HEK293 (cell line): ENCODE measurements at regions of chr11 and their contacts with region 1.

Region 1: GRCh38 chr11:65850831-65851811 is 6.9 kb downstream of the CFL1 start:
- H3K4me3 ChIP-seq: no peak overlapping the region
- H3K27ac ChIP-seq: no peak overlapping the region
- H3K4me1 ChIP-seq: no peaks in the 10 kb centered on the region
- CTCF ChIP-seq: no peak

Region 2: DNA sequence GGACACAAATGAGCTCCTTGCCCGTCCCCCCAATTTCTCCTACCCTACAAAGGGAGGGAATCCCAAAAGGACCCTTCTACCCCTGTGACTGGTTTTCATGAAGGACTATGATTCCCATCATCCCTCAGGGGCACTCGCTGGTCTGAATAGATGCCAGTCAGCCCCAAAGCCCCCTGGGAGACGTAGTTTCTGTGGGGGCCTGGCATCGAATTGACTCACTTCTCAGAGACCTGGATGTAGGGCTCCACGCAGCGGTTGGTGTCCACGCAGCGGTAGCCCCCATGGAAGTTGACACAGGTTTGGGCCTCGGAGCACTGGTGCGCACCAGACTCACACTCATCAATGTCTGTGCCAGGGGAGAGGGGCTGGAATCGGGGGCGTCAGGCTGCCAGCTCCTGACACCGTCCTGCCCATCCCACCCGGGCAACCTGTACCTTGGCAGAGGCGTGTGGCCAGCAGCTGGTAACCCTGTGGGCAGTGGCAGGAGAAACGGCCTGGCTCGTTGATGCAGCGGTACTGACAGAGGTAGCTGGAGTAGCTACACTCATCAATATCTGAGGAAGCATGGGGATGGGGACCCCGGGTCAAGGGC is 17.1 kb after region 1 on chr11:
- CTCF ChIA-PET with region 1: interaction called, 3 read pairs
- POLR2A ChIA-PET with region 1: interaction called, 11 read pairs
- H3K4me3 ChIP-seq: no peak overlapping the region
- H3K27ac ChIP-seq: no peak overlapping the region
- H3K4me1 ChIP-seq: no peaks in the 10 kb centered on the region
- CTCF ChIP-seq: no peak

Region 3: DNA sequence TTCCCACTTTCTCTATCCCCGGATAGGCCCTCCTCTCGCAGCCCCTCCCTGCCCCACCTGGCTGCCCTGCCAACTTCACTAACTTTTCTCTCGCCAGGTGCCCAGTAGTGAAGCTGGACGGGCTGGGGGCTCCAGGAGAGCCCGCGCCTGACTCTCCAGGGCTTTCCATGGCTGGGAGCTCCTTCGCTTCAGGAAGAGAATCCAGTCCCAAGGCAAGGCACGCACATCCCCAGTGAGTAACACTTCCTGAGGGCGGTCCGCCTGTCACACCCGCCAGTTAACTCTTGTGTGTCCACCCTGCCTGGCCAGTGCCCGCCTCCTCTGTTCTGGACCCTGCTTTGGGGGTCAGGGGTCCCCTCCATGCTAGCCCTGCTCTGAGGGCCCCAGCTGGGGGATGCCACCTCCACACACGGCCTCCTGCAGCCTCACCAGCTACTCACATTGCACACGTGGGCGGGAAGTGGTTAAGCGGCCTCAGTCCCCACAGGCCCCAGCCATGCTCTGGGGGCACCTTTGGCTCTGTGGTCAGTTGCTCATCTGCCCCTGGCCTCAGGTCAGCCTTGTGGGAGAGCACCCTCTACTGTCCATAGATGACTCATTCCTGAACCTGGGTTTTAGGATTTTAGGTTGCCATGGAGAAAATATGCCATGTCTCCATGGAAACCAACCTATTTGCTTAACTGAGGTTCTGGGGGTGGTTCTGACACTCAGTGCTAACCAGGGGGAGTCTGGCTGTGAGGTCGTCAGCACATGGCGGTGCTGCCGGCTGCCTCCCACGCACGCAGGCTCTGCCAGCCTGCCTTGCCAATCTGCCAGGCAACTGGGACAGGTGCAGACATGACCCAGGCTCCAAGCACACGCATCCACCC is 485.3 kb after region 1 on chr11 and contains the start of gene RIN1:
- CTCF ChIA-PET with region 1: no interaction called
- POLR2A ChIA-PET with region 1: no interaction called
- H3K4me3 ChIP-seq: no peak within 1 kb of the TSS
- H3K27ac ChIP-seq: no peak within 1 kb of the TSS
- H3K4me1 ChIP-seq: no peaks in the 10 kb centered on the region
- CTCF ChIP-seq: peak; percentile 49; the same call in 1 of the 2 replicates